ENCODE measurements at regions of chr20 and their contacts with region 1.

Region 1: DNA sequence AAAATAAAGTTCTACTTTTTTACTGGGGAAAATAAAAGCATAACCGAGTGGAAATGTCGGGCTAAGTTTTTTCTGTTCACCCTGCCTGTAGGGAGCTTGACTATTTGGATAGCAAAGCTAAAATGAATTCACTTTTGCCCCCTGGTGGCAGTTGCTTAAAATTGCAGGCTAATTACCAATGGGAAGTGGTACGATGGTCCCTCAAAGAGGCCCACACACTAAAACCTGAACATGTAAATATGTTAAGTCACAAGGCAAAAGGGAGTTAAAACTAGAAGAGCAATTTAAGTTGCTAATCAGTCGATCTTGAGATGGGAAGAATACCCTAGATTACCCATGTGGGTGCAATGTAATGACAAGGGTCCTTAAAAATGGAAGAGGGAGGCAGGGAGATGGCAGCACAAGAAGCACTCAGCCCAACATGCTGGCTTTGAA is 916 bp upstream of the SUN5 start:
- DNase-seq: peak in 3 of 9 experiments; percentile 38 to 69 (median 58)
- ATAC-seq: no peak
- H3K4me3 ChIP-seq: no peak overlapping the region
- H3K4me3 Mint-ChIP-seq: no peak overlapping the region
- H3K27ac ChIP-seq: no peak overlapping the region
- H3K27ac Mint-ChIP-seq: no peak overlapping the region
- H3K4me1 ChIP-seq: peaks cover 11% of the 10 kb centered on the region
- H3K4me1 Mint-ChIP-seq: peaks cover 27% of the 10 kb centered on the region
- H3K27me3 ChIP-seq: no peaks in the 10 kb centered on the region
- H3K27me3 Mint-ChIP-seq: no peaks in the 10 kb centered on the region
- CTCF ChIP-seq: peak; percentile 64

Region 2: GRCh38 chr20:32626859-32627636 is 378.1 kb before region 1 on chr20:
- CTCF ChIA-PET with region 1: no interaction called
- POLR2A ChIA-PET with region 1: no interaction called
- intact Hi-C with region 1: no loop called
- DNase-seq: peak in 4 of 9 experiments; percentile 18 to 54 (median 25)
- ATAC-seq: peak; percentile 31
- H3K4me3 ChIP-seq: no peak overlapping the region
- H3K4me3 Mint-ChIP-seq: peak overlapping the region; percentile 53
- H3K27ac ChIP-seq: no peak overlapping the region
- H3K27ac Mint-ChIP-seq: no peak overlapping the region
- H3K4me1 ChIP-seq: peaks cover 26% of the 10 kb centered on the region
- H3K4me1 Mint-ChIP-seq: peaks cover 9% of the 10 kb centered on the region
- H3K27me3 ChIP-seq: no peaks in the 10 kb centered on the region
- H3K27me3 Mint-ChIP-seq: no peaks in the 10 kb centered on the region
- CTCF ChIP-seq: no peak

Region 3: GRCh38 chr20:32966881-32967781 is 38.0 kb before region 1 on chr20:
- CTCF ChIA-PET with region 1: interaction called, 17 read pairs
- POLR2A ChIA-PET with region 1: no interaction called
- intact Hi-C with region 1: loop called (anchors 5 kb)
- DNase-seq: peak in 8 of 9 experiments; percentile 22 to 91 (median 67)
- ATAC-seq: peak; percentile 41
- H3K4me3 ChIP-seq: peak overlapping the region in 1 of 2 experiments; percentile 21
- H3K4me3 Mint-ChIP-seq: peak overlapping the region; percentile 73
- H3K27ac ChIP-seq: peak overlapping the region; percentile 73 to 95
- H3K27ac Mint-ChIP-seq: no peak overlapping the region
- H3K4me1 ChIP-seq: peaks cover 81% of the 10 kb centered on the region
- H3K4me1 Mint-ChIP-seq: peaks cover 79% of the 10 kb centered on the region
- H3K27me3 ChIP-seq: no peaks in the 10 kb centered on the region
- H3K27me3 Mint-ChIP-seq: no peaks in the 10 kb centered on the region
- CTCF ChIP-seq: no peak

Region 4: DNA sequence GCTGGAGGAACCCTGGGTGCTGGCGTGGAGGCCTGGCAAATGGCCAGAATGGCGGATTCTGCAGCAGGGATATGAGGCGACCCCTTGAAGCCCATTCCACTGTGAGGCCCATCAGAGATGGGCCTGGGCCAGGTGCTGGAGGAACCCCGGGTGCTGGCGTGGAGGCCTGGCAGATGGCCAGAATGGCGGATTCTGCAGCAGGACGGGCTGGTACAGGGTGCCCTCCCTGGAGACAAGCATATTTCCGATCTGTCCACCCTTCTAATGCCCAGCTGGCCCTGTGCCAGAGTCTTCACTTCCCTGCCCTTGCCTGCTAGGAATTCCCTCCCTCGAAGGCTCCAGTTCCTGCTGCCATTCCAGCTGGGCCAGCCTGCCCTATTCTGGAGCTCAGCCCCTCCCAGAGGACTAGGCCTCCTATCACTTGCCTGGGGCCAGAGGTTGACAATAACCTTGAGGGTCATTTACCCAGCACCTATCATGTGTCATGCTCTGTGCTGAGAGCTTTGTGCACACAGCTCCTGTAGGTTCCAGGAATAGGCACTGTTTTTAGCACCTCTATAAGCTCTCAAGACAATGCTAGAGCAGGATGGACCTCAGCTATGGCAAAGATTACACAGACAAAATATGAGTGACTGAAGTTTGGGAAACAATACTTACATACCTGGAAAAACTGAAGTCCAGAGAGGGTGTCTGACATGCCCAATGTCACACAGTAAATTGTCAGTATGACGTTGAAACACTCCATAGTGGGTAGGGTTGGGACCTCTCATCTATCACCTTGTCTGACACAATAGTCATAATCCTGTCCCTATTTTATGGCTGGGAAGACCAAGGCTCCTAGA is 22.3 kb before region 1 on chr20:
- CTCF ChIA-PET with region 1: interaction called, 12 read pairs
- POLR2A ChIA-PET with region 1: no interaction called
- intact Hi-C with region 1: no loop called
- DNase-seq: no peak
- ATAC-seq: no peak
- H3K4me3 ChIP-seq: no peak overlapping the region
- H3K4me3 Mint-ChIP-seq: no peak overlapping the region
- H3K27ac ChIP-seq: no peak overlapping the region
- H3K27ac Mint-ChIP-seq: no peak overlapping the region
- H3K4me1 ChIP-seq: no peaks in the 10 kb centered on the region
- H3K4me1 Mint-ChIP-seq: peaks cover 25% of the 10 kb centered on the region
- H3K27me3 ChIP-seq: no peaks in the 10 kb centered on the region
- H3K27me3 Mint-ChIP-seq: no peaks in the 10 kb centered on the region
- CTCF ChIP-seq: no peak

Region 5: DNA sequence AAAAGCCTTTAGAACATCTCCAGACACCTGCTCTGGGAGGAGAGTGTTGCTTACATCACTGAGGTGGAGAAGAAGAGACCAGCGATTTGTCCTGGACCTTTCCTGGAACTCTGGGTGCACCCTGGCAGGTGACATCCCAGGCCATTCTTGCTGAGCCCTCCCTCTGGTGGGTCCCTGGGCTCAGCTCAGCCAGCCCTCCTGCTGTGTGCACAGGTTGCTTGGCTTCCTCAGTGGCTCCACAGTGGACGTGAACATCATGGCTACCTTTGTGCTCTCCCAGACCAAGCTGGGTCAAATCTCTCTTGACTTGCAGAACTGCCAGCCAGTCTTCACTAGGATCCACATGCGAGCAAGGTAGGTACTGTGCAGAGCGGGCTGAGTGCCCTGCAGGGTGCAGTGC is 142.9 kb after region 1 on chr20:
- CTCF ChIA-PET with region 1: no interaction called
- POLR2A ChIA-PET with region 1: no interaction called
- intact Hi-C with region 1: no loop called
- DNase-seq: peak in 1 of 9 experiments; percentile 23
- ATAC-seq: no peak
- H3K4me3 ChIP-seq: no peak overlapping the region
- H3K4me3 Mint-ChIP-seq: no peak overlapping the region
- H3K27ac ChIP-seq: no peak overlapping the region
- H3K27ac Mint-ChIP-seq: no peak overlapping the region
- H3K4me1 ChIP-seq: no peaks in the 10 kb centered on the region
- H3K4me1 Mint-ChIP-seq: no peaks in the 10 kb centered on the region
- H3K27me3 ChIP-seq: no peaks in the 10 kb centered on the region
- H3K27me3 Mint-ChIP-seq: peaks cover 34% of the 10 kb centered on the region
- CTCF ChIP-seq: no peak

Measured in CD8-positive, alpha-beta T cell (primary cell).